GM10248 (cell line): ENCODE measurements at regions of chrX and their contacts with region 1.

Region 1: DNA sequence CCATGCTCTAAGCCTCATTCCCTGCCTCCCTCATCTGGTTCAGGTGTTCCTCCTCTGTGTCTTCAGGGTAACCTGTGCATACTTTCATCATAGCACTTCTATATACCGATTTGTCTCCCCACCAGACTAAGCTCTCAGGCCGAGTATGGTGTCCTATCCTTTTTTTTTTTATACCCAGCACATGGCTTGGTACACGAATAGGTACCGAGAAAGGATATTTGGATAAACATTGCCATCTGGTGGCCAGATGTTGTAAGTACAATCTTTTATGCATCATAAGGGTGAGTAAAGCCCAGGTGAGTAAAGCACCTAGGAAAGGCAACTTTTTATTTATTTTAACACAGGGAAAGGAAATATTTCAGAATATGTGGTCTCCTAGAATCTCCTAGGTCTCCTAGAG is 68.4 kb downstream of the MID2 start:
- DNase-seq: peak; percentile 32
- CTCF ChIP-seq: peak; percentile 36

Region 2: DNA sequence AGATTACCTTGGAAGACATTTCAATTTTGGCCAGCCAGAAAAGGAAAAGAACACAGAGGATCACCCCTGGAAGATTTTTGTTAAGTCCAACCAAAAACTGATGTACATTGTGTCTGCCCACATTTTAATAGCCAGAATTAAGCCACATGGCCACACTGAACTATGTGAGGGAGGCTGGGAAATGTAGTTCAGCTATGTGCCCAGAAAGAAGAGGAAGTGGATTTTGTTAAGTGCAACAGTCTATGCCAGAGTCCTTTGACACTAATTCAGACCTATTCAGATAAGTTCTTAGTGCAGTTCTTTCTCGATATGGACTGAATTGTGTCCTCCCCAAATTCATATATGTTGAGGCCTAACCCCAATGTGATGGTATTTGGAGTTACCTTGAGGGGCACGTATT is 247.3 kb before region 1 on chrX:
- CTCF ChIA-PET with region 1: no interaction called
- POLR2A ChIA-PET with region 1: no interaction called
- DNase-seq: no peak
- CTCF ChIP-seq: no peak

Region 3: DNA sequence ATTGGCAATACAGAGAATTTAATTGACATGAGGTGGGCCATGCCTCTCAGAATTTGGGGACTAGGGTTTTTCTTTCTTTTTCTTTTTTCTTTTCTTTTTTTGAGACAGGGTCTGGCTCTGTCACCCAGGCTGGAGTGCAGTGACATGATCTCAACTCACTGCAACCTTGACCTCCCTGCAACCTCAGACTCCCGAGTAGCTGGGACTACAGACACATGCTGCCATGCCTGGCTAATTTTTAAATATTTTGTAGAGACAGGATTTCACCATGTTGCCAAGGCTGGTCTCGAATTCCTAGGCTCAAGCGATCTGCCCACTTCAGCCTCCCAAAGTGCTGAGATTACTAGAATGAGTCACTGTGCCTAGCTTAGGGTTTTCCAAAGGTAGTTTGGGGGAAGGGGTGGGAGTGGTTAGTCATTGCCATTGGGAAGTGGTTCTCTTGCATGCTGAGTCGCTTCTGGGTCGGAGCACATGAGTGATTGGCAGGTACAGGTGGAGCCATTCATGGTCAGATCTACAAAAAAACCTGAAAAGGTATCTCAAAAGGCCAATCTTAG is 13.9 kb before region 1 on chrX:
- CTCF ChIA-PET with region 1: interaction called, 10 read pairs
- POLR2A ChIA-PET with region 1: no interaction called
- DNase-seq: no peak
- CTCF ChIP-seq: no peak

Region 4: DNA sequence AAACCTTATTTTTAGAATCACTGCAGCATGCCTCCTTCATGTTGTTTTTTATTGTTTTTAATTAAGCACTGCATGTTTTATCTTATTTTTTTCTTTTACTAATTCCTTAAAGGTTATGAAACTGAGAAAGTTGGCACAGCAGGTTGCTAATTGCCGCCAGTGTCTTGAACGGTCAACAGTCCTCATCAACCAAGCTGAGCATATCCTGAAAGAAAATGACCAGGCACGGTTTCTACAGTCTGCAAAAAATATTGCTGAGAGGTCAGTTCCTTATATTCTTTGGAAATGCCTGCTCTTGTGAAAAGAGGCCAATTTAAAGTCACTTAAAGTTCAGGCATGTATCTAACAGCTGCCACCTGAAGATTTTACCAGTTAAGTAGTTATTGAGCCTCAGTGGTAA is 11.3 kb after region 1 on chrX:
- CTCF ChIA-PET with region 1: no interaction called
- POLR2A ChIA-PET with region 1: no interaction called
- DNase-seq: no peak
- CTCF ChIP-seq: no peak

Region 5: DNA sequence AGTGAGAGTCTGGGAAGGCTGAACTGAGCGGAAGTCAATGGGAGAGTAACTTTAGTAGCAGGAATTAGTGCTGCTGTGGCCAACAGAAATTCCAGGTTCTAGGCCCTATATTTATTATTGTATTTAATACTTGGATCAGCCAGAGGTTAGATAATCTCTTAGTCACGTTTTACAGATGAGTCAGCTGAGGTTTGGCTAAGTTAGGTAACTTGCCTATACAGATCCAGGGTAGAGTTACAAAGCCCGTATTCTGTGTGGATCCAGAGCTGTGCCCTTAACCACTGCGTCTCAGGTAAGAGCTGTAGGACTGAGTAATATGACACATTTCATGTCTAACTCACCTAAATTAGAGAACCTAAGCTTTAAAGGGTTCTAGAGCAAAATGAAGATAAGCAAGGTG is 176.9 kb after region 1 on chrX:
- CTCF ChIA-PET with region 1: no interaction called
- POLR2A ChIA-PET with region 1: no interaction called
- DNase-seq: no peak
- CTCF ChIP-seq: no peak